CD8-positive, alpha-beta memory T cell (primary cell): ENCODE measurements at regions of chr2 and their contacts with region 1.

Region 1: GRCh38 chr2:174577967-174578589 is 19.5 kb downstream of the WIPF1 start:
- DNase-seq: peak; percentile 34 to 73 (median 64)
- H3K4me3 ChIP-seq: no peak overlapping the region
- H3K4me3 Mint-ChIP-seq: peak overlapping the region in 1 of 7 donors; percentile 15
- H3K27ac ChIP-seq: no peak overlapping the region
- H3K27ac Mint-ChIP-seq: peak overlapping the region; percentile 43 to 89 (median 77)
- H3K4me1 ChIP-seq: peaks cover 65% of the 10 kb centered on the region
- H3K4me1 Mint-ChIP-seq: peaks cover 80 to 96% (median 93%) of the 10 kb centered on the region in 3 donors
- H3K27me3 ChIP-seq: no peaks in the 10 kb centered on the region
- H3K27me3 Mint-ChIP-seq: no peaks in the 10 kb centered on the region

Region 2: DNA sequence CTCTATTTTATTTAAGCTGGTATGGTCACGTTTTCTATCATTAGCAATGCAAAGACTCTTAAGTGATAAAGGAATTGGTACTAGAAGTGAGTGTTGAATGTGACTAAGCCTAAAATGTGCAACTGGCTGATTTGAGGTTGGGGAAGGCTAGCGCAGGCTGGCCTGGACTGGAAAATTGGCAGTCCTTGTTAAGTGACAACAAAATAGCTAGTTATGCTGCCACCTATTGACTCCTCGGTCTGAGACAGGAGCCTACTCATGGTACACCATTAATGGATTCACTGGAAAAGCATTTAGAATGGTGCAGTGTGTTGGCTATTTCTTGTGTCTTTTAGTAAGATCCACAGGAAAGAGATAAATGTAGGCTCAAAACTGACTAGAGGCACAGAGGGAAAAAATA is 25.2 kb after region 1 on chr2:
- CTCF ChIA-PET with region 1: interaction called, 167 read pairs
- POLR2A ChIA-PET with region 1: interaction called, 3 read pairs
- DNase-seq: peak; percentile 22 to 72 (median 58)
- H3K4me3 ChIP-seq: no peak overlapping the region
- H3K4me3 Mint-ChIP-seq: peak overlapping the region in 4 of 7 donors; percentile 25 to 29 (median 28)
- H3K27ac ChIP-seq: no peak overlapping the region
- H3K27ac Mint-ChIP-seq: peak overlapping the region; percentile 23 to 93 (median 82)
- H3K4me1 ChIP-seq: peaks cover 80% of the 10 kb centered on the region
- H3K4me1 Mint-ChIP-seq: peaks cover 82 to 94% (median 93%) of the 10 kb centered on the region in 3 donors
- H3K27me3 ChIP-seq: no peaks in the 10 kb centered on the region
- H3K27me3 Mint-ChIP-seq: no peaks in the 10 kb centered on the region

Region 3: DNA sequence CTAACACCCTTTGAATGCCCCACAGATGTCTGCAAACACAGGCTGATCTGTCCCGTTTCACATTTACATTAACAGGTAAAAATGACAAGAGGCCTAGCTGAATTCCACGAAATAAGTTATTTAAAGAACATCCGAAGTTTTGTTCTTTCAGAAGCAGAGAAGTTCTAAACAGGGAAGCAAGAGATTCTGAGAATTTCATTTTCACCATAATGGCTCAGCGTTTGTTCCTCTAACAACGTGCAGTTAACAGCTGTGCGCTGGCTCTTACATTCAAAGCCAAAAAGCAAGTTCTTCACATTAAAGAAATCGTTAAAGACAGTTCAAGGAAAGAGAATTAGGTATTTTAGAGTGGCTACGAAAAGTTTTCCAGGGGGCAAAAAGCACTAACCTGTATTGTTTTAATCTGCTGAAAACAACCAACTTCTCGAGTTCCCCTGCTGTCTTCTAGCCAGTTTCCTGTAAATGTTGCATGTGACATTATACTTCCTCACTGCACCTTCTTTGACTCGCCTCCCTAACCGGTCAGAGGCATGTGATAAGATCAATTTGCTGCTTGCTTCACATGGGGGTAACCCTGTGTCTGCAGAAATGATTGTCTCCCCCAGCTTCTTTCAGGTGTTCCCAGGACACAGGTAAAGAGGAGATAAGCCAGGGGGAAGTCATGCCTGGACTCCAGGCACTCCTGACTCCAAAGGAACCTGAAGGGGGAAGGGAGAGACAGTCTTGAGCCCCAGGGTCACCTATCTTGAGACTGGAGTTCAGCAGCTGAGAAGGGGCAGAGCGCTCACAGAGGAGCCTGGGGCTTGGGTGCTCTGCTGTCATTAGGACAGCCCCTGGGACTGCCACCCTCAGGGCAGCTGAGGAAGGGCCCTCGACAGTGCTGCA is 56.3 kb after region 1 on chr2:
- CTCF ChIA-PET with region 1: interaction called, 4 read pairs
- POLR2A ChIA-PET with region 1: interaction called, 13 read pairs
- DNase-seq: peak; percentile 20 to 69 (median 53)
- H3K4me3 ChIP-seq: peak overlapping the region; percentile 78
- H3K4me3 Mint-ChIP-seq: peak overlapping the region; percentile 90 to 97 (median 92)
- H3K27ac ChIP-seq: peak overlapping the region; percentile 66
- H3K27ac Mint-ChIP-seq: peak overlapping the region; percentile 85 to 99 (median 94)
- H3K4me1 ChIP-seq: peaks cover 54% of the 10 kb centered on the region
- H3K4me1 Mint-ChIP-seq: peaks cover 63 to 86% (median 76%) of the 10 kb centered on the region in 3 donors
- H3K27me3 ChIP-seq: no peaks in the 10 kb centered on the region
- H3K27me3 Mint-ChIP-seq: no peaks in the 10 kb centered on the region

Region 4: DNA sequence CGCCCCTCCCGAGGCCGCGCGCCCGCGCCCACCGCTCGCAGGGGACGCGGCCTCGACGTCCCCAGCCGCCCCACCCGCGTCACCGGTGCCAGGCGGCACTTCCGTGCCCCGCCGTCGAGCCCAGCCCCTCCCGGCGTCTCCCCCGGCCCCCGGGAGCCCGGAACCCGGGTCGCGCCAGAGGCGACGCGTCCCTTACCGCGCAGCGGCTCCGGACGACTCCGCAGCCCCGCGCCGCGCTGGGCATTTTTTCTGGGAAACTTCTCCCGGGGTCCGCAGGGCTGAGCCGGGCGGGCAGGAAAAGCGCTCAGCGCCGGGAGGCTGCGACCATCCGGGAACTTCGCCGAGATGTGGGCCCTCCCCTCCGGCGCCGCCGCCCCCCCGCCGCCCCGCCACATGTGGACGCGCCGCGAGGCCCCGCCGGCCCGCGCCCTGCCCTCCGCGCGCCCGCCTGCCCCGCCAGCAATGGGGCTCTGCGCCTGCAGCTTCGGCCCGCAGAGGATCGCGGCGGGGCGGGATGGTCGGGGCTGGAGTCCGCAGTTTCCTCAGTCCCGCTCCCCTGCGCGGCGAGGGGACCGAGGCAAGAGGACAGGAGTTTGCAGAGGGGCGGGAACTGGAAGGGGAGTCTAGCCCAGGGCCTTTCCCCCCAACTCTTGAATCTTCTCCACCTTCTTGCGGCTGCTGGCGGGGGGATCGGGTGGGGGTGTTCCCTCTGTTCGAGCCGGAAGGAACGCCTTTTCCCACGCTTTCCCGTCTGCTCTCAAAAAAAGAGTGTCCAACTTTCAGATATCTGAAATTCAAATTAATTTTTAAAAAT is 104.7 kb after region 1 on chr2:
- CTCF ChIA-PET with region 1: interaction called, 113 read pairs
- POLR2A ChIA-PET with region 1: no interaction called
- DNase-seq: peak; percentile 54 to 80 (median 74)
- H3K4me3 ChIP-seq: peak overlapping the region; percentile 67
- H3K4me3 Mint-ChIP-seq: peak overlapping the region; percentile 89 to 99 (median 91)
- H3K27ac ChIP-seq: peak overlapping the region; percentile 71
- H3K27ac Mint-ChIP-seq: peak overlapping the region; percentile 82 to 98 (median 94)
- H3K4me1 ChIP-seq: peaks cover 31% of the 10 kb centered on the region
- H3K4me1 Mint-ChIP-seq: peaks cover 51 to 74% (median 54%) of the 10 kb centered on the region in 3 donors
- H3K27me3 ChIP-seq: no peaks in the 10 kb centered on the region
- H3K27me3 Mint-ChIP-seq: no peaks in the 10 kb centered on the region

Region 5: DNA sequence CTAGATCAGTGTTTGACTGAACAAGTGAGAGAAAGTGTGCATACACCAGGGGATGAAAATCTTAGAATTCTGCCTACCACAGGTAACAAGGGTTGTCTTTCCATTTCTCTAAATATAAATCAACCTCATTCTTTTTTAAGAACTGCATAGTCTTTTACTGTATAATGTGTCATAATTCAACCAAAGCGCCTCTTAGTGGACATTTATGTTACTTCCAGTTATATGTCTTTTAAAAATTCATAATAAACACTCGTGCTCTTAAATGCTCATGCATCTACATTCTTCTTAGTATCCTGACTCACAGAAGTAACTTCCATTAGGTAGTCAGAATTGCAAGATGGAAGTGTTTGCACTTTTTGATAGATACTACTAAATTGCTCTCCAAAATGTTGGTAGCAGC is 110.0 kb after region 1 on chr2:
- CTCF ChIA-PET with region 1: interaction called, 113 read pairs
- POLR2A ChIA-PET with region 1: no interaction called
- DNase-seq: peak in 2 of 5 donors; percentile 36 to 47
- H3K4me3 ChIP-seq: no peak overlapping the region
- H3K4me3 Mint-ChIP-seq: peak overlapping the region in 1 of 7 donors; percentile 57
- H3K27ac ChIP-seq: no peak overlapping the region
- H3K27ac Mint-ChIP-seq: peak overlapping the region; percentile 19 to 67 (median 39)
- H3K4me1 ChIP-seq: no peaks in the 10 kb centered on the region
- H3K4me1 Mint-ChIP-seq: peaks cover 18 to 37% (median 24%) of the 10 kb centered on the region in 3 donors
- H3K27me3 ChIP-seq: no peaks in the 10 kb centered on the region
- H3K27me3 Mint-ChIP-seq: peaks cover 2 to 8% of the 10 kb centered on the region in 2 donors

Region 6: DNA sequence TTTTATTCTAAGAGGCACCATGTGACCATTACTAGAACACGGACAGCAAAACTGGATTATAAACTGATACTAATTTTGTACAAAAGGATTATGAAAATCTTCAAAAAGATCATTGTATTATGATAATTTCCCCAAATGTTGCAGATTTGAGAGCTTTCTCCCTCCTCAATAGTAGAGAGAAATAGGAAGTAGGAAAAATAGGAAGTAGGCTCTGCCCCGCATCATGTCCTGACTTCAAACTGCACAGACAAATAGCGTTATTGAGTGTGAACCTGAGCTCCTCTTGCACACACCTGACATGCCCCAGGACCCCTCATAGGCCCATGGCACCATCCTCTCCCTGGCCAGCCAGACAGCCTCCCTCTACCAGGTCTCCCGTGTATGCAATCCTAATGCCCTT is 160.8 kb after region 1 on chr2:
- CTCF ChIA-PET with region 1: no interaction called
- POLR2A ChIA-PET with region 1: no interaction called
- DNase-seq: no peak
- H3K4me3 ChIP-seq: no peak overlapping the region
- H3K4me3 Mint-ChIP-seq: no peak overlapping the region
- H3K27ac ChIP-seq: no peak overlapping the region
- H3K27ac Mint-ChIP-seq: peak overlapping the region in 1 of 8 donors; percentile 73
- H3K4me1 ChIP-seq: no peaks in the 10 kb centered on the region
- H3K4me1 Mint-ChIP-seq: no peaks in the 10 kb centered on the region
- H3K27me3 ChIP-seq: no peaks in the 10 kb centered on the region
- H3K27me3 Mint-ChIP-seq: peaks cover 0 to 5% of the 10 kb centered on the region in 2 donors